OCI-LY7 (cell line): ENCODE measurements at regions of chr10 and their contacts with region 1.

Region 1: DNA sequence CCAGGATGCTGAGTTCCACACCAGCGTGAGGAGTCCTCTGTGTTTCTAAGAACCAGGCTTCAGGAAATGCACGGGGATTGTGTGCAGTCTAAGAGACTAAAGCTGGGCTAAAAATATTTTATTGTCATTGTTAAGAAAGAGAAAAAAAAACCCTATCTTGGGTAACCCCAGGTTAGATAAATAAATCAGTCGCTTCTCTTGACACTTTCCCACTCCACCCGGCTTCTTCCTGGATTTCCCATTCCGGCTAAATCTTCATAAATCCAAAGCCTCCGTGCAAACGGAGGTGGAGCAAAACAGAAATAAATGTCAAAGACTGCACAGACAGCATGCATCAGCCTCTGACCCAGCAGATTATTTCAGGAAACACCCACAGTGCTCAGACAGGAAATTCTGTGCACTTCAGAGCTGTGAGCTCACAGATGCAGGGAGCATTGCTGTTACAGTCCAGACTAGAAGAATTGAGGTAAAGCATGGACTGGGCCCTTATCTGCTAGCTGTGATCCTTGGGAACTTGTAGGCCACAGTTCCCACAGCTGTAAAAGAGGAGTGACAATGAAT is 44.8 kb upstream of the GRID1 start:
- DNase-seq: peak; percentile 91
- H3K4me3 ChIP-seq: peak overlapping the region; percentile 53
- H3K27ac ChIP-seq: peak overlapping the region; percentile 95
- H3K4me1 ChIP-seq: peaks cover 69% of the 10 kb centered on the region
- CTCF ChIP-seq: no peak

Region 2: GRCh38 chr10:86203162-86203905 is 208.0 kb before region 1 on chr10:
- CTCF ChIA-PET with region 1: no interaction called
- POLR2A ChIA-PET with region 1: no interaction called
- intact Hi-C with region 1: no loop called
- DNase-seq: peak; percentile 19
- H3K4me3 ChIP-seq: no peak overlapping the region
- H3K27ac ChIP-seq: no peak overlapping the region
- H3K4me1 ChIP-seq: no peaks in the 10 kb centered on the region
- CTCF ChIP-seq: no peak

Region 3: GRCh38 chr10:86438091-86438749 is 26.9 kb after region 1 on chr10:
- CTCF ChIA-PET with region 1: no interaction called
- POLR2A ChIA-PET with region 1: interaction called, 11 read pairs
- intact Hi-C with region 1: no loop called
- DNase-seq: no peak
- H3K4me3 ChIP-seq: no peak overlapping the region
- H3K27ac ChIP-seq: peak overlapping the region; percentile 4
- H3K4me1 ChIP-seq: peaks cover 27% of the 10 kb centered on the region
- CTCF ChIP-seq: no peak

Region 4: GRCh38 chr10:86497621-86498020 is 86.3 kb after region 1 on chr10:
- CTCF ChIA-PET with region 1: no interaction called
- POLR2A ChIA-PET with region 1: interaction called, 10 read pairs
- intact Hi-C with region 1: no loop called
- DNase-seq: no peak
- H3K4me3 ChIP-seq: no peak overlapping the region
- H3K27ac ChIP-seq: no peak overlapping the region
- H3K4me1 ChIP-seq: no peaks in the 10 kb centered on the region
- CTCF ChIP-seq: no peak